Activated T-helper 2 cell treated with anti-CD3 and anti-CD28 coated beads, Interferon-gamma antibody, Interleukin-2, Interleukin-4, amounts not matched to agents 10 μg/mL and 5 μg/mL and 100 μg/mL, durations not matched to agents 14 hours and 24 hours and 36 hours (primary cell): ENCODE measurements at regions of chr12 and their contacts with region 1.

Region 1: DNA sequence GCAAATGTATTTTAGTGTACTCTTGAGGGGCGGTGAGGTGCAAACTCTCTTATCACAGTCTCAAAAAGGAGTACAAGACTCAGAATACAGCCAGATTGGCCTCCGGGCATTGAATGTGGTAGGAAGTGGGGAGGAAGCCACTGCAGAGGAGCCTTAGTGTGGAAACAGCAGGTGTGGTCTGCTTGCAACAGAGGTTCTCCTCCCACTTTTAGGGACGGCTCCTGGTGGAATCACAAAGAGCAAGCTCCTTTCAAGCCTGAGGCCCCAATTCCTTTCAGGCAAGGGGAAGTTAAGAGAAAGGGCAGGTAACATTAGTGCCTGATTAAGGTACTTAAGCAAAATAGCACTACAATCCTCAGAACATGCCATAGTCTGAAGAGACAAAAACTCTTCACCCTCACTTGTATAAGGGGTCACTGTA is 23.7 kb upstream of the SLC2A3 start:
- DNase-seq: peak; percentile 57
- H3K4me3 Mint-ChIP-seq: peak overlapping the region; percentile 93
- H3K27ac Mint-ChIP-seq: peak overlapping the region; percentile 93
- H3K4me1 Mint-ChIP-seq: peaks cover 37% of the 10 kb centered on the region
- H3K27me3 Mint-ChIP-seq: no peaks in the 10 kb centered on the region

Region 2: DNA sequence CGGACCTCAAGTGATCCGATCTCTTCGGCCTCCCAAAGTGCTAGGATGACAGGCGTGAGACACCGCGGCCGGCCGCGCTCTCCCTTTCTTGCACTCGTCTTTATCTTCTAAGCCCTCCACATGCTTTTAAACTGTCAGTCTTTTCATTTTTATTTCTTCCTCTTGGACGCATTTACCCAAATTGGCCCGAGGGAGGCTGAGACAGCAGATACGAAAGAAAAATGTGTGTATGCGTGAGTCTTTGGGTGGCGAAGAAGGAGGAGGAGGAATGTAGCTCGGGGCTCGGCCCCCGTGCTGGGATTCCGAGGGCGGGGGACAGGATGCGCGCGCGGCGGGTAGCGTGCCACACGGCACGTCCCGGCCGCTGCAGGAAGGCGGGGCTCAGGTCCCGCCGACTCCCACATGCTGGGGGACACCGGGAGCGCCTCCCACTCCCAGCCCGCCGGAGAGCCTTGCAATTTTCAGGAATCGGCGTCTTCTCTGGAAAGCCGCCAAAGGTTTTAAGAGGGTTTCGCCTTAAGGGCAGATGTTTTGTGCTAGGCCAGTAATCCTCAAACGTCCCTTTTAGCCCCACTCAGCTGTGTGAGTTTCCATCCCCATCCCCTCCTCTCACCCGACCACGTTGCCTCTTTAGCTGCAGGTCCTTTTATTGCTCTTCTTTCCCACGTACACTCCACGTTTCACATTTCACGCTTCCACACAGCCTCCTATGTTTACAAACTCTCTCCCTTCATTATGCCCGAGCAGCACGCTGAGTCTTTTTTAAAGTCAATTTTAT is 11.0 kb after region 1 on chr12:
- intact Hi-C with region 1: loop called (anchors 1 kb)
- DNase-seq: peak; percentile 85
- H3K4me3 Mint-ChIP-seq: peak overlapping the region; percentile 96
- H3K27ac Mint-ChIP-seq: peak overlapping the region; percentile 100
- H3K4me1 Mint-ChIP-seq: peaks cover 27% of the 10 kb centered on the region
- H3K27me3 Mint-ChIP-seq: no peaks in the 10 kb centered on the region

Region 3: DNA sequence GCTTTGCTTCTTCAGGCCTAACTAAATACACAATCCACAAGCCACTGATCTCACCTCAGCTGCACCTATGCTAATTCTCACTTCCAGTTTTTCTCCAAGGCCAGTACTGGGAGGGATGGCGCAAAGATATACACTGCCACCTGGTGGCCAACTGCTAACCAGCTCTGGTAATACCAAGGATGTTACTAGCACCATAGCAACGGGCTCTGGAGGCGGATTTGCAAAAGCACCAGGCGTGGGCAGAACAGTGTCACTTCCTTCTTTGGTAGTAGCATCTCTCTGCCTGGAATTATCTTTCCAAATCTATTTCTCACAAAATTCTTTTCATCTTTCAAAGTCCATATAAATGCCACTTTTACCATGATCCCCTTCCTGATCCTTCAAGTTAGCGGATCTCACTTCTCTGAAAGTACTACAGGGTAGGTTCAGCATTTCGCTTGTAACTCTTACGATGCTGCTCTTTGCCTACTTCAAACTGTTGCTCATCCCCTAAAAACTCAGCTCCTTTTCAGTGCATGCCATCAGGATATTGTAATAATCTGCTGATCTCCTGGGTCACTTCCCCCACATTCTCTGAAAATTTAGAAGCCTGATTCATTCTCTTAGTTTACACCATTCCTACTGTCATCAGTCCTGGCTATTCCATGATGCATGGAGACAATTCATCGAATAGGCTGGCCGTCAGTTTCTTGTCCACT is 35.7 kb after region 1 on chr12:
- intact Hi-C with region 1: loop called (anchors 1 kb)
- DNase-seq: peak; percentile 80
- H3K4me3 Mint-ChIP-seq: no peak overlapping the region
- H3K27ac Mint-ChIP-seq: no peak overlapping the region
- H3K4me1 Mint-ChIP-seq: peaks cover 17% of the 10 kb centered on the region
- H3K27me3 Mint-ChIP-seq: no peaks in the 10 kb centered on the region

Region 4: DNA sequence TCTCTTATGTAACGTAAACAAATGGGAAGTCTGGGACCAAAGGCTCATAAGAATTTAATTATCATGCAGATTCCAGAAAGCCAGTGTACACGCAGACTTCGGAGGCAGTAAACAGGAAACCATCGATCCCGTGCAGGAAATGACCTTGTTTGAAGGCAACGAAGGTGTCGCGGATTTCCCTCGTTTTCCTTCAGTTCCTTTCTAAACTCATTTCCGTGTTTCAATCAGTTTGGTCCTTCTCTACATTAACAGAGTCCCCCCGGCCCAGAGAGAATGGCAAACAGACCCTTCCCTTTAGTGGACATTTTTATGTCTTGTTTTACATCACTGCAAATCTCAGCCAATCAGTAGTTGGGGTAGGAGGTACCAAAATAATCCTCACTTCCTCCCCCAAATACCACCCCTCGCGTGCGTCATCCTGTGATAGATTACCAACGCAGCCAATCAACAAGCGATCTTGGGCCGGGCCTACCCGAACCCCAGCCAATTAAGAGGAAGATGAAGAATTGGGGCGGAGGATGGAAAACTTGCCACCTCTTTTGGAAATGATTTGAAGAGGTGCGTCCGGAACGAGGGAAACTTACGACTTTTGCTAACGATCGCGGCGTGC is 66.7 kb after region 1 on chr12:
- intact Hi-C with region 1: loop called (anchors 2 kb)
- DNase-seq: peak; percentile 97
- H3K4me3 Mint-ChIP-seq: peak overlapping the region; percentile 85
- H3K27ac Mint-ChIP-seq: peak overlapping the region; percentile 99
- H3K4me1 Mint-ChIP-seq: peaks cover 7% of the 10 kb centered on the region
- H3K27me3 Mint-ChIP-seq: no peaks in the 10 kb centered on the region